ENCODE measurements at regions of chrX and their contacts with region 1.

Region 1: GRCh38 chrX:119015407-119016237 is 41.2 kb downstream of the LONRF3 start:
- DNase-seq: peak; percentile 85
- H3K4me3 Mint-ChIP-seq: peak overlapping the region; percentile 14
- H3K27ac Mint-ChIP-seq: peak overlapping the region; percentile 13
- H3K4me1 Mint-ChIP-seq: peaks cover 24% of the 10 kb centered on the region
- H3K27me3 Mint-ChIP-seq: no peaks in the 10 kb centered on the region

Region 2: DNA sequence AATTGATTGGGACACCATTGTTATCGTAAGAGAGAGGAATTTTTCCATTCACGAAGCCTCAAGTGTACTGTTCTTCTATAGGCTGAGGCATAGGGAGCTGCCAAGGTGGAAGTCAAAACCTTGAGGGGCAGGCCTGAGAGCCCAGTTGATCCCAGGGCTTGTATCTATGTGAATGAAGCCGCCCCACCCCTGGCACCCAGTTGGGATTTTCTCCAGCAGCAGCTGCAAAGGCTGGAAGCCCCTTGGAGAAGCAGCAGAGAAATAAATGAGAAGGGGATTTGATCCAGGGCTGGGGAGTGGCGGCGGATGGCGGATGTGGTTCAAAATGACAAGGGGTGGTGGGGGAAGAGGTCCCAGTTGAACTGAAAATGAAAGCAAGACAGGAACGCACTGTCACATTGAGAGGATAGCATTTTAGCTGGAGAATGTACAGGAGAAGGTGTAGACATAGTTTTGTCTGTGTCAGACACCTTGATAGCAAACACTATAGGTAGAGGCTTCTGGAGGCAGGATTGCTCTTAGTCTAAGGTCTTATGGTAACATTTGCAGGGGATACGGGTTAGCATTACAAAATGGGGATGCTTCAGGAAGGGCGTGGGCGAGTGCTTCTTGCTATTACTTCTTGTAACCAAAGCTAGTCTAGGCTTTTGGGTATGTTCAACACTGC is 487.4 kb before region 1 on chrX:
- CTCF ChIA-PET with region 1: no interaction called
- intact Hi-C with region 1: loop called (anchors 5 kb)
- DNase-seq: peak; percentile 73
- H3K4me3 Mint-ChIP-seq: peak overlapping the region; percentile 79
- H3K27ac Mint-ChIP-seq: peak overlapping the region; percentile 96
- H3K4me1 Mint-ChIP-seq: peaks cover 73% of the 10 kb centered on the region
- H3K27me3 Mint-ChIP-seq: no peaks in the 10 kb centered on the region

Region 3: GRCh38 chrX:118974908-118975671 is 40.5 kb before region 1 on chrX:
- CTCF ChIA-PET with region 1: no interaction called
- intact Hi-C with region 1: loop called (anchors 1 kb)
- DNase-seq: peak; percentile 59
- H3K4me3 Mint-ChIP-seq: peak overlapping the region; percentile 83
- H3K27ac Mint-ChIP-seq: peak overlapping the region; percentile 88
- H3K4me1 Mint-ChIP-seq: peaks cover 12% of the 10 kb centered on the region
- H3K27me3 Mint-ChIP-seq: peaks cover 6% of the 10 kb centered on the region

Region 4: GRCh38 chrX:119004920-119005524 is 10.6 kb before region 1 on chrX:
- CTCF ChIA-PET with region 1: interaction called, 18 read pairs
- intact Hi-C with region 1: no loop called
- DNase-seq: peak; percentile 63
- H3K4me3 Mint-ChIP-seq: no peak overlapping the region
- H3K27ac Mint-ChIP-seq: no peak overlapping the region
- H3K4me1 Mint-ChIP-seq: peaks cover 12% of the 10 kb centered on the region
- H3K27me3 Mint-ChIP-seq: no peaks in the 10 kb centered on the region

Region 5: GRCh38 chrX:119067023-119067739 is 51.6 kb after region 1 on chrX:
- CTCF ChIA-PET with region 1: interaction called, 9 read pairs
- intact Hi-C with region 1: loop called (anchors 2 kb)
- DNase-seq: peak; percentile 72
- H3K4me3 Mint-ChIP-seq: no peak overlapping the region
- H3K27ac Mint-ChIP-seq: no peak overlapping the region
- H3K4me1 Mint-ChIP-seq: no peaks in the 10 kb centered on the region
- H3K27me3 Mint-ChIP-seq: no peaks in the 10 kb centered on the region

Region 6: DNA sequence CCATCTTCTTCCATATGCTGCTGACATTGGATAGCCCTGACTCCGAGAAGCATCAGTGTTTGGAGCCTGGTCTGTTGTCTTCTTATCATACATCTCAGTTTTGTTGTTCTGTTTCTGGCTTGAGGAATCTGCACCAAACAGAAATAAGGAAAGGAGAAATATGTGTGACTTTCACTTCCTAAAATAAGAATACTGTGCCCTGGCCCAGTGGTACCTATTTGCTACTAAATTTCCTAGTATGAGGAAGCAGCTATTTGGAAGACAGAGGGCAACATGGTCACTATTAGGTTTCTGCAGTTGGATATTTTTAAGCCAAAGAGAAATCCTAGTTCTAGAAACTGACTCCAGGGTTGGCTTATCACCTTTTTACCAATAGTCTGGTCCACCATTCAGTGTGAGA is 74.0 kb after region 1 on chrX:
- CTCF ChIA-PET with region 1: no interaction called
- intact Hi-C with region 1: no loop called
- DNase-seq: no peak
- H3K4me3 Mint-ChIP-seq: no peak overlapping the region
- H3K27ac Mint-ChIP-seq: no peak overlapping the region
- H3K4me1 Mint-ChIP-seq: no peaks in the 10 kb centered on the region
- H3K27me3 Mint-ChIP-seq: no peaks in the 10 kb centered on the region

Region 7: DNA sequence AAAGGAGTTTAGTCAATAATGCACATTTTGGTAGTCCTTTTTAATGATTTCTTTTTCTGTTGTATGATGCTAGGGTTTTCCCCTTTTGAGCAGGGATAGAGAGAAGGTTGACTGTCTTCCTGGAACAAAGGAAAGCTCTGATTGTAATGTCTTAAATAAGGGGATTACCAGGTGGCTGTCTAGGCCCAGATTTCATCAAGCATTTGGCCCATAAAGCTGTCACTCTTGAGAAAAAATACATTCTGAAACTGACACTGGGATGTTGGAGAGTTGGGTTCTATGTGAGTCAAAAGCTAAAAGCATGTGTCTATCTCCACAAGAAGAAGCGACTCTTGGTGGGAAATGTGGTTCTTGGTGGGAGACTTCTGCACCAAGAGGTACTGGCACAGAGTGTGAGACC is 85.5 kb after region 1 on chrX:
- CTCF ChIA-PET with region 1: no interaction called
- intact Hi-C with region 1: loop called (anchors 1 kb)
- DNase-seq: no peak
- H3K4me3 Mint-ChIP-seq: no peak overlapping the region
- H3K27ac Mint-ChIP-seq: peak overlapping the region; percentile 21
- H3K4me1 Mint-ChIP-seq: peaks cover 8% of the 10 kb centered on the region
- H3K27me3 Mint-ChIP-seq: no peaks in the 10 kb centered on the region

Region 8: DNA sequence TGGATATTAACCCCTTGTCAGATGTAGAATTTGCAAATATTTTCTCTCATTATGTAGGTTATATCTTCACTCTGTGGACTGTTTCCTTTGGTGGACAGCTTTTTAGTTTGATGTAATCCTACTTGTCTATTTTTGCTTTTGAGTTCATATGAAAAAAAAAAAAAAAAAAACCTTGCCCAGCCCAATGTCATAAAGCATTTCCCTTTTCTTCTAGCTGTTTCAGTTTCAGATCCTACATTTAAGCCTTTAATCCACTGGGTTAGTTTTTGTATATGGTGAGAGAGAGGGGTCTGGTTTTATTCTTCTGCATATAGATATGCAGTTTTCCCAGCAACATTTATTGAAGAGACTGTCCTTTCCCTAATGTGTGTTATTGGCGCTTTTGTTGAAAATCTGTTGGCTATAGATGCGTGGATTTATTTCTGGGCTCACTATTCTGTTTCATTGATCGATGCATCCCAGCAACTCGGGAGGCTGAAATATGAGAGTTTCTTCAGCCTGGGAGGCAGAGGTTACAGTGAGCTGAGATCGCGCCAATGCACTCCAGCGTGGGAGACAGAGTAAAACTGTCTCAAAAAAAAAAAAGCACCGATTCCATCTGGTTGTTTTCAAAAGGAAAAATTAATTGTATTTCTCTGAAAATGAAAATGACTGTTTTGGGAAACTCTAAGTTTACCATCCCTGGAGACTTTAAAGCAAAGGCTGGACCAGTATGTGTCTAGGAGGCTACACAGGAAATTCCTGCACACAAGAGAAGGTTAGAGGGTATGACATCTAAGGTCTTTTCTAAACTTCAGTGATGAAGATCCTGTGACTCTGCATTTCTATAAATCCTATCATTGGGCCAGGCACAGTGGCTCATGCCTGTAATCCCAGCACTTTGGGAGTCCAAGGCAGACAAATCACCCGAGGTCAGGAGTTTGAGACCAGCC is 514.0 kb after region 1 on chrX:
- CTCF ChIA-PET with region 1: no interaction called
- intact Hi-C with region 1: no loop called
- DNase-seq: no peak
- H3K4me3 Mint-ChIP-seq: no peak overlapping the region
- H3K27ac Mint-ChIP-seq: no peak overlapping the region
- H3K4me1 Mint-ChIP-seq: no peaks in the 10 kb centered on the region
- H3K27me3 Mint-ChIP-seq: no peaks in the 10 kb centered on the region